ENCODE measurements at regions of chr7 and their contacts with region 1.

Region 1: DNA sequence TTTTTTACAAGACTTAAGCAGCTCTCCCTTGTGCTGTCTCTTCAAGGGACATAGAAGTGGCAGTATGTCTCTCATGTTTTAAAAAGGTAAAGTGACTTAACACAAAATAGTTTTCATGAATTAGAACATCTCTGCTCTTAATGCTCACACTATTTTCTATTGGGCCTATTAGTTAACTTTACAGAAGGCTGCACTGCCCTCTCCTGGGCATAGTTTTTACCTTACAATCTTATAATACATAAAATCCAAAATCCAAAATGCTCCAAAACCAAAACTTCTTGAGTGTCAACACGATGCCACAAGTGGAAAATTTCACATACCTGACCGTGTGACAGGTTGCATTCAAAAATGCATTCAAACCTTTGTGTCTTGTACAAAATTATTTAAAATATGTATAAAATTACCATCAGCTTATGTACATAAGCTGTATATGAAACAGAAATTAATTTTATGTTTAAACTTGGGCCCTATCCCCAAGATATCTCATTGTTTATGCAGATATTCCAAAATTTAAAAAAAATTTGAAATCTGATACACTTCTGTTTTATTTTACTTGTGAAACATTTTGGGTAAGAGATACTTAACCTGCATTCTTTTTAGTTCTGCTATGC is 25.8 kb downstream of the TES start:
- DNase-seq: peak; percentile 37
- H3K4me3 Mint-ChIP-seq: no peak overlapping the region
- H3K27ac Mint-ChIP-seq: no peak overlapping the region
- H3K4me1 Mint-ChIP-seq: peaks cover 28% of the 10 kb centered on the region
- H3K27me3 Mint-ChIP-seq: no peaks in the 10 kb centered on the region
- CTCF ChIP-seq: peak; percentile 48

Region 2: DNA sequence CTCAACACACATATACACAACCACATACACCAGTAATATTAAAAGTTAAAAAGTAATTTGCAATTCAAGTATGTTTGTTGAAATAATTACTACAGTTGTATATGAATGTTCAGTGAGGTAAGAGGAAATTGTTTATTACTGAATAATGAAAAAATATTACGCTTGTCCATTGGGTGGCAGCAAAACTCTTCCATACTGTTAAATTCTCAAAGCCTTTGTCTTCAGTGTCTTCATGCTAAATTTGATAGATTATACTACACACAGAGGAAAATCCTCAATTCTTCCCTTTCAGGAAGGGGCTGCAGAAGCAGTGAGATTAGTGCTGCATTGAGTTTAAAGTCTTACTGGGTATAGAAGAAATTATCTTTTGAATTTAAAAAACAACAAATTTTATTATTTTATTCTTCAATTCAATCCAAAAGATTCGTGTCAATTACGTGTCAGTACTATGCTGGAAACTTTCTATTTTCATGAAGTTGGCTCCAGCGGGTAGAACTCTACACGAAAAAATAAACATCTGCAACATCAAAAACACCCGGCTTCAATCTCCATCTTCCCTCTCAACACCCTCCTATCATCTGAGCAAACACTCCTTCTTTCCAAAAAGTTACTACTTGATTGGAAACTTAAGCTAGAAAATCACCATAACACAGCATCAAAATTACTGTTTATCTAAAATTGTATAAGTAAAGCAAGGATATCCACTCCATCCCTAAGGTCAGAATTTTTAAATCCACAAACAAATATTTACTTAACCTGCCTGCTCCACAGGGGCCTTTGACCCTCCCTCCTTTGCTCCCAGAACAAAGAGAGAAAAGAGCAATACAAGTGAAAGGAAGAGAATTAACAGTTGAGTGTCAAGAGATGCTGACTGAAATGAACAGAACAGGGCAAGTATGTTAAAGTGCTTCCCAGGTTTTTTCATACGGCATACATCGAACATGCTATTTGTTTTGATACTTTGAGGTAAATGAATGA is 62.8 kb before region 1 on chr7:
- CTCF ChIA-PET with region 1: no interaction called
- intact Hi-C with region 1: loop called (anchors 1 kb)
- DNase-seq: peak; percentile 38
- H3K4me3 Mint-ChIP-seq: no peak overlapping the region
- H3K27ac Mint-ChIP-seq: no peak overlapping the region
- H3K4me1 Mint-ChIP-seq: peaks cover 23% of the 10 kb centered on the region
- H3K27me3 Mint-ChIP-seq: peaks cover 17% of the 10 kb centered on the region
- CTCF ChIP-seq: peak; percentile 25

Region 3: DNA sequence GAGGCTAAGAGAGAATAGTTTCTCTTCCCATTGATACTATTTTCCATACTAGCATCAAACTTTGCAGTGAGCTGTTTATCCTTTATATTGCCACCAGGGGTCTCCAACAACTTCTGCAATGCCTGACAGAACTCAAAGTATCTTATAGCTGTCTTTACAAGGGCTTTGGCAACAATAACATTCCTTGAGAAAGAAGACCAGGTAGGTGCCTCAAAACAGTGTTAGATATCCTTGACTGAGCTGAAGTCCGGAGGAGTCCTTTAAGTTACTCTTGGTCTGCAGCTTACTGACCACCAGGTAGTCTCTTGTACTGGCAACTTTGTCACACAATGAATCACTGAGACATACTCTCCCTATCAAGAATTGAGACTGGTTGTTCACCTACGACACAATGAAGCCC is 55.8 kb before region 1 on chr7:
- CTCF ChIA-PET with region 1: interaction called, 24 read pairs
- intact Hi-C with region 1: loop called (anchors 1 kb)
- DNase-seq: peak; percentile 22
- H3K4me3 Mint-ChIP-seq: no peak overlapping the region
- H3K27ac Mint-ChIP-seq: no peak overlapping the region
- H3K4me1 Mint-ChIP-seq: no peaks in the 10 kb centered on the region
- H3K27me3 Mint-ChIP-seq: no peaks in the 10 kb centered on the region
- CTCF ChIP-seq: peak; percentile 75

Region 4: DNA sequence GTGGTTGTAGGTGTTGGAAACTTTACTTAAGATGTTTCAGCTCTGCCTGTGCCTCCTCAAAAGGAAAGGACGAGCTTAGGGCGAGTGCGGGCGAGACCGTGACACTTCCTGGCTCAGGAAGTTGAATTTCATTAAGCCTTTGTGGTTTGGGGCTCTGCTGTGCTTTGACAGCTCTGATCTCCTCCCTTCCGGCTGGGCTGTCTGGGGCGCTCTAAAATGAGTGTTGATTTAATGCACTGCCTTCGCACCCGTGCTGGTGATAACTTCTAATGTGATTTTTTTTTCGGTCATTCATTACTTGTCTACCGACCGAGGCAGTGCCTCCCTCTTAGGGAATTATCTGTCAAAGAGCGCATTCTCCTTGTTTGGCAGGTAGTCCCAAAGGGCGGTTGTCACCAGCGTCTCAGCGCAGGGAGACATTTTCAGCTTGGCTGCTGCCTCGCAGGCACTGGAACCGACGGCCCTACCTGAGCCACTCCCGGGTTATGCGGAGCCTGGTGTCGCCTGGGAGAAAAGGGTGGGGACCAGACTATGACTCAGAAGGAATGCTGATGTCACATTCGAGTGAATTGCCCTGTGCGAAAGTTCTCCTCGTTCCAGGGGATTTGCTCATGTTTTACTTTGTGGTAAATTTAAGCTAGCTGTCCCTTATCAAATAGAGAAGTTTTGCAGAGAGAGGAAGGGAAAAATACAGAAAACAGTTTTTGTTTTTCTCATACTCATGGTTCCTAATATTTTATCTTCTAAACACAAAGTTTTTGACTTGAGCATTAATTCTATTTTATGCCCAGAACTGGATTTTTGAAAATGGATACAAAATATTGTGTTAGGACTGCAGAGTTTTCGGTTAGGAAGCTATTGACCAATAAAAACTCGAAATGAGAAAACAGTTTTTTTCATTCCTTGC is 24.9 kb before region 1 on chr7:
- CTCF ChIA-PET with region 1: interaction called, 7 read pairs
- intact Hi-C with region 1: loop called (anchors 2 kb)
- DNase-seq: peak; percentile 90
- H3K4me3 Mint-ChIP-seq: peak overlapping the region; percentile 98
- H3K27ac Mint-ChIP-seq: peak overlapping the region; percentile 99
- H3K4me1 Mint-ChIP-seq: peaks cover 40% of the 10 kb centered on the region
- H3K27me3 Mint-ChIP-seq: no peaks in the 10 kb centered on the region
- CTCF ChIP-seq: no peak

Region 5: DNA sequence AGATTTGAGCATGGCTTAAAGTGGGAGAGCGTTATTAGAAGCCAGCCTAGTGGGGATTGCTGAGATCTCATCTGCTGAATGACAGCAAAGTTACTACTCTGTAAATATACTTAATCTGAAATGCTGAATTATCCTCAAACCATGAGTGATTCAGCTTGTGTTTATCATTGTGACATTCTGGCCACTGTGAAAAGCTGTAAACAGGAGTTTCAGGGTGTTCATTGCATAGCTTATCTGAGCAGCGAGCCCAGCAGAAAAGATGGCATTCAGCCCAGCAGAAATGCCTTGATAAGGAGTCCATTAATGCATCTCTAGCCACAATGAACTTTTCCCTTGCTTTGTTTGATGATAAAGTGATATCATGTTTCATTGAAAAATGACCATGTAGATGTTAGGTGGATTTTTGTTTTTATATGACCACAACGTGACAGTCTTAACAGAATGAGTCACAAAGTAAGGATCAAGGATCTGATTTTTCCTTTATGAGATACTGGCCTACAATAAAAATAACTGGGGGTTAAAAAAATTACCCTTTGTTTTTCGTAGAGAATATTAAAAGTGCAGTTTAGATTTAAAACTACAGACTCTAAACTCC is 18.0 kb before region 1 on chr7:
- CTCF ChIA-PET with region 1: interaction called, 9 read pairs
- intact Hi-C with region 1: loop called (anchors 2 kb)
- DNase-seq: peak; percentile 65
- H3K4me3 Mint-ChIP-seq: peak overlapping the region; percentile 32
- H3K27ac Mint-ChIP-seq: peak overlapping the region; percentile 82
- H3K4me1 Mint-ChIP-seq: peaks cover 58% of the 10 kb centered on the region
- H3K27me3 Mint-ChIP-seq: no peaks in the 10 kb centered on the region
- CTCF ChIP-seq: no peak

Region 6: DNA sequence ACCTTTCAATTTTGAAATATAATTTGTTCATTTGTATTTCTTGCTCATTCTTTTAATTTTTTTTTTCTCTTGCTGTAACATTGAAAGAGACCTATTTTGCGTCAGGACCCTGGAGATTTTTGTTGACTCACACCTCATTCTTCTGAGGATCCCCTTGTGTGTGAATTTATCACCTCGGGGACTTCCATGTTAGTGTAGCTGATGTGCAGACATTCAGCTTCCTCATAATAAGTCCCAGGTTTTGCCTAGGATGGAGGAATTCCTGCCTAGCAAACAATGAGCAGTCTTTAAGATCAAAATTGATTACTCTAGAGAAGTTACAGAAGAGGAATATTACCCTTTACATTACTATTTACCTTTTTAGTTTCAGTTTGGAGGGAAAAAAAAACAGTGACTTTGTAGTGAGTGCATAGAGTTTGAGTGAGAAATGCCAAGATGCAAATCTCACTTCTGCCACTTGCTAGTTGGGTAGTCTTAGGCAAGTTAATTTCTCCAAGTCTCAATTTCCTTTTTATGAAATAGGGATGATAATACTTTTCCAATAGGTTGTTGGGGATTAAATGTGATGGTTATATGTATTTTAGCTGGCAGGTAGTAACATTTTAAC is 11.5 kb before region 1 on chr7:
- CTCF ChIA-PET with region 1: no interaction called
- intact Hi-C with region 1: loop called (anchors 1 kb)
- DNase-seq: no peak
- H3K4me3 Mint-ChIP-seq: no peak overlapping the region
- H3K27ac Mint-ChIP-seq: peak overlapping the region; percentile 39
- H3K4me1 Mint-ChIP-seq: peaks cover 61% of the 10 kb centered on the region
- H3K27me3 Mint-ChIP-seq: no peaks in the 10 kb centered on the region
- CTCF ChIP-seq: no peak

Measured in Calu3 (cell line).